PC-3 (cell line): ENCODE measurements at regions of chr18 and their contacts with region 1.

Region 1: GRCh38 chr18:58314284-58314683 is 270.3 kb downstream of the NEDD4L start:
- DNase-seq: peak; percentile 86
- ATAC-seq: peak; percentile 59
- H3K4me3 ChIP-seq: peak overlapping the region; percentile 27; the same call in 1 of the 2 replicates
- H3K27ac ChIP-seq: peak overlapping the region; percentile 91
- H3K4me1 ChIP-seq: peaks cover 39% of the 10 kb centered on the region
- H3K27me3 ChIP-seq: no peaks in the 10 kb centered on the region
- CTCF ChIP-seq: no peak

Region 2: GRCh38 chr18:57595347-57595746 is 718.9 kb before region 1 on chr18:
- CTCF ChIA-PET with region 1: no interaction called
- POLR2A ChIA-PET with region 1: no interaction called
- intact Hi-C with region 1: no loop called
- DNase-seq: no peak
- ATAC-seq: no peak
- H3K4me3 ChIP-seq: no peak overlapping the region
- H3K27ac ChIP-seq: no peak overlapping the region
- H3K4me1 ChIP-seq: no peaks in the 10 kb centered on the region
- H3K27me3 ChIP-seq: no peaks in the 10 kb centered on the region
- CTCF ChIP-seq: no peak

Region 3: DNA sequence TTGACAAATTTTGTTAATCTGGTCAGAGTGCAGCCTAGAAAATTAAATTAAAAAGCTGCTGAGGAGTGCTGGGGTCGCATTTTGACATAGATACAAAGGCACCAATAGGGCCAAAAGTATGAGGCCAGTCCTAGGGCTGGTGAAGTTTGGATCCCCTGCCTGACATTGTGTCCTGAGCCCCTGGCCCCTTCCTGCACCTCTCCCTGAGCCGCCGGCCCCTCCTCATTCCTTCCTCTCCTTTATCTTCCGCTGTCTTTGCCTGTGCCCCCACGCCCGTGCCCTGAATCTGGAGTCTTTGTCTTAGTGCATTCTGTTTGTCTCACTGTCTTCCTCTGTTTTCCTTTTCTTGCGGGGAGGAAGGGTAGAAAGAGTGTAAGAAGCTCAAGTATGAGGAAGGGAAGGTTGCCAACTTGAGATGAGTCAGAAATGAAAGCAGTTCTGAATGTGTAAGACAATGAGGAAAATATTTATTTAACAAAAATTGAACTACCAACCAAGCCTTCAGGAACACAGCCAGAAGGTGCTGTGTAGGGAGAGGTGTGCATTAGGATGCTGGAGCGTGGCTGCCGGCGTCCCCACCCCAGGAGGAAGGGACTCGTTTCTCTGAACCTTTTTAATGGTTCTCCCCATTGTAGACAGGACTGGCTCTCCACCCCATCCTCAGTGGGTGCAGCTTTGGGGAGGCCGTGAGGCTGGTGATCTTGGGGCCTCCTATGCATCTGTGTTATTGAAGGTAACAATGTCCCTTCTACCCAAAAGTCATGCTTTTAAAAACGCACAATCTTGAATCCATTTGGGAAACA is 137.2 kb before region 1 on chr18:
- CTCF ChIA-PET with region 1: no interaction called
- POLR2A ChIA-PET with region 1: no interaction called
- intact Hi-C with region 1: no loop called
- DNase-seq: peak; percentile 94
- ATAC-seq: peak; percentile 95
- H3K4me3 ChIP-seq: peak overlapping the region; percentile 36; the same call in 1 of the 2 replicates
- H3K27ac ChIP-seq: peak overlapping the region; percentile 33
- H3K4me1 ChIP-seq: peaks cover 17% of the 10 kb centered on the region
- H3K27me3 ChIP-seq: no peaks in the 10 kb centered on the region
- CTCF ChIP-seq: no peak

Region 4: DNA sequence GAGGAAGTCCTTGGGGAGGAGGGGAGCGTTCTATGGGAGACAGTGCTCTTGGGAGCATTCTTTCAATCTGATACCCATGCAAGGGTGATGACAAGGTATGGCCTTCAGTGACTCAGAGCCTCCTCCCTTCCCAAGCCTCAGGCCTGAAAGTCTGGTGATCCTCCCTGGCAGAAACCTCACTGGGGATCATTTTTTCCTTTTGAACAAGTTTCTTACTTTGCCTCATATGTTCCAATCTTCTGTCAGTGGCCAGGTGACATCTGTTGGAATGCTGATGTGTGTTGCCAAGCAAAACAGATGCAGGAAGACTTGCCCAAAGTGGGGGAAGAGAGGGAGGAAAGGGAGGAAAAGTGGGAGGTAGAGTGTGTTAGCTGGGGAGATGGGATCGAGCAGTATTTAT is 45.4 kb before region 1 on chr18:
- CTCF ChIA-PET with region 1: interaction called, 3 read pairs
- POLR2A ChIA-PET with region 1: no interaction called
- intact Hi-C with region 1: loop called (anchors 2 kb)
- DNase-seq: peak; percentile 96
- ATAC-seq: peak; percentile 94
- H3K4me3 ChIP-seq: peak overlapping the region; percentile 60
- H3K27ac ChIP-seq: peak overlapping the region; percentile 92
- H3K4me1 ChIP-seq: peaks cover 65% of the 10 kb centered on the region
- H3K27me3 ChIP-seq: no peaks in the 10 kb centered on the region
- CTCF ChIP-seq: no peak

Region 5: DNA sequence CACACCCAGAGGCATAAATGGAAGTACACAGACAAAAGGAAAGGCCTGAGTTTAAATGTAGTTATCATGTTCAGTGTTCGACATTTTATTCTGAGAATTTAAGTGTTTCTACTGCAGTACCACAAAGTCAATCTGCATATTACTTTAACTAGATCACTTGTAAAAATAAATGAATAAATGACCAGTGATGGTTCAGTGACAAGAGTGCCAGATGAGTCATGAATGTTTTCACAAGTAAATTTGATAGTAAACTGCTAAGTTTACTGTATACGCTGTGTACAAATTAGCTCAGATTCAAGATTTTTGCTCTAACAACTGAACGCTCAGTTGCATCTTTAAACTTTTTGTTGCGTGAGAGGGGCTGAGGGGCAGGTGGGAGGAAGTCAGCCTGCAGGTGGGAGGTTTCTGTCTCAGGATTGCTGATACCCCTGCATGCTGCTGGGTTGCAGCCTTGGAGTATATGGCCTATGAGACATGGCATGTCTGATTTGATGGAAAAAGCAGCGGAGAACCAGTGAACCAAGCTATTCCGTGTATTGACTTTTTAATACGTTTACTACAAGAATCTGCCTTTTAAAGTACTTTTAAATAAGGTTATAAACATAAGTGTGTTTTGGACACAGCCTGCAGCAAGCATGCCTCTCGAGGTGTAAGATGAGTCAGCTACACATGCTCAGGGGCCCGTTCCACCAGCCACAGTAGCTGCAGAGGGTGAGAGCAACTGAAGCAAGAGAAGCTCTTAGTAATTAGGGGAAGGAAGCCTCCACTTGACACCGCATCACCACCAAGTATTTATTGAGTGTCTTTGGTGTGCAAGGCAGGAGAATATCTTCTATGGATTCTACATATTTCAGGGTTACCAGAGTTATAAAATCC is 25.1 kb before region 1 on chr18:
- CTCF ChIA-PET with region 1: no interaction called
- POLR2A ChIA-PET with region 1: no interaction called
- intact Hi-C with region 1: loop called (anchors 2 kb)
- DNase-seq: peak; percentile 49
- ATAC-seq: peak; percentile 73
- H3K4me3 ChIP-seq: no peak overlapping the region
- H3K27ac ChIP-seq: peak overlapping the region; percentile 36
- H3K4me1 ChIP-seq: peaks cover 49% of the 10 kb centered on the region
- H3K27me3 ChIP-seq: no peaks in the 10 kb centered on the region
- CTCF ChIP-seq: no peak

Region 6: DNA sequence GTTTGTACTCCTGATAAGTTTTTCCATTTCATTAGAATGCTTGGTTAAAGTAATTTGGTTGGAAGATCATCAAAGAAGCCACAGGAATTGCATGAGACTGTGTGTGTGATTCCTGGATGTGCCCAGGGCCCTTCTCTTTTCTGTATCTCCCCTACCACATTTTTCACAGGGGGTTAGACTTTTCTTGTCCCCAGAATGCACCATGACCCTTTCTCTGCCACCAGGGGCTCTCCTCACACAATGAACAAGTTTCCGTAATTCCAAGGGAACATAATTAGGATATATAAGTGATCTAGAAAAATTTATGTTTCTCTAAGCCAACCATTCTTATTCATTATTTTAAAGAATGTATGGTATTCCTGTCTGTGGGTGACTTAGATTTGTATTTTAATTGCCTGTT is 21.5 kb after region 1 on chr18:
- CTCF ChIA-PET with region 1: no interaction called
- POLR2A ChIA-PET with region 1: interaction called, 10 read pairs
- intact Hi-C with region 1: no loop called
- DNase-seq: no peak
- ATAC-seq: no peak
- H3K4me3 ChIP-seq: no peak overlapping the region
- H3K27ac ChIP-seq: no peak overlapping the region
- H3K4me1 ChIP-seq: no peaks in the 10 kb centered on the region
- H3K27me3 ChIP-seq: no peaks in the 10 kb centered on the region
- CTCF ChIP-seq: no peak; the same call in 1 of the 2 replicates